Spleen (tissue), 13 donors: ENCODE measurements at regions of chr5 and their contacts with region 1.

Region 1: DNA sequence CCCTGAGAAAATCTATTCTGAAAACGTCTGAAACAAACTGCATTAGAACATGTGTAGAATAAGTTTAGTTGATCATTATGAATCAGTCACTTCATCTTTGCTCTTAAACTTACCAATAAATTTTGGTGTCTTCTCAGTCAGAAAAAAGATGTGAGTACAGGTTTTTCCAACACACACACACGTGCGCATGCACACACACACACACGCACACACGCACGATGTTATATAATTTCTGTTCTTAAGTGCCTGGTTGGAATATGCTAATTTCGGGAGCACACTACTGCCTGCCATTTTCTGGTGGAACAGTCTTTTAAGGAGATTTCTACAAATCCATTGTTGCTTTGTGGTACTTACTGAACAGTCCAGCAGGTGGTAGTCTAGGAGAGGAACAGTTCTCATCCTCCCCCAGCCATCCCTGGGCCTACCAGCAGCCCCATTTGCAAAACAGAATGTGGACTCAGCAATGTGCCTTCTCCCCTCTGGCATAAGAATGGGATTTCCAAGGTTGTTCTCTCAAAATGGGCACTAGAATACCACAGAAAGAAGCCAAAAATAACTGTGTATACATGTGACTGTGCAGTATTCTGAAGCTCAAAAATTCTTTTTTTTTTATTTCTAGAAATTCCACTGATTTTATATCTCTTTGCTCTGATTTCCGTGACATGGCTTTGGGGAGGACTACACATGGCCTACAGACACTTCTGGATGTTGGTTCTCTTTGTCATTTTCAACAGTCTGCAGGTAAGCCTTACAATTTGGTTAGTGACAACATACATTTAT is 281.3 kb downstream of the ARRDC3 start:
- DNase-seq: peak; percentile 83
- H3K4me3 ChIP-seq: no peak overlapping the region
- H3K27ac ChIP-seq: no peak overlapping the region
- H3K4me1 ChIP-seq: peaks cover 0 to 6% (median 0%) of the 10 kb centered on the region in 6 donors
- H3K27me3 ChIP-seq: no peaks in the 10 kb centered on the region
- CTCF ChIP-seq: peak; percentile 44 to 80 (median 73)
- POLR2A ChIP-seq: no peak

Region 2: DNA sequence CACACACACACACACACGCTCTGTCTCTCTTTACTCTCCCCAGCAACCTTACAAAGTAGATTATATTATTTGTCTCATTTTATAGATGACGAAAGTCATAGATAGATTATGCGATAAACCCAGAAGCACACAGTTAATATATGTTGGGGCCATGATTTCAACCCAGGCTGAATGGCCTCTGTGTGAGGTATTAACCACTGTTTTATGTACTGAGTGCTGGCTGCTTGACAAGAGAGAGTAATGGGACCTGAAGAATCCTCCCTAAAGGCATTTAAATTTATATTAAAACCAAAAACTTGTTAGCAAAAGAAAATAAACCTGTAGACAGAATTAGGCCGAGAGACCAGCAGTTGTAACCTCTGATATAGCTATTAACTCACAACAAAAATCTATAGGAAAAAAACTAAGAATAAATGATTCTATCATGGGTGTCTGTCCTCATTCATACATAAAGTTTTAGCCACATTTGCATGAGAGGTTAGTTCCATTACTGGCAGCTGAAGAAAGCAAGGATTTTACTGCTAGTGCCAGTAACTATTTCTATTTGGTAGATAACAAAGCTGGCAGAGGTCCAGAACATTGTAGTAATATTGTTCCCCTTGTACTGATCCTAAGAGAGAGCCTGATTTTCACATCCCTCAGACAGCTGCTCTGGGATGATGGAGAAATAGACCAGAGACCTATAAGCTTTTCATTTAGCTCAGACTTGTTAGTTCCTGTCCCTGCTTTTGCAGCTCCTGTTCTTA is 292.3 kb before region 1 on chr5:
- intact Hi-C with region 1: no loop called
- DNase-seq: no peak
- H3K4me3 ChIP-seq: no peak overlapping the region
- H3K27ac ChIP-seq: no peak overlapping the region
- H3K4me1 ChIP-seq: no peaks in the 10 kb centered on the region
- H3K27me3 ChIP-seq: no peaks in the 10 kb centered on the region
- CTCF ChIP-seq: no peak
- POLR2A ChIP-seq: no peak

Region 3: DNA sequence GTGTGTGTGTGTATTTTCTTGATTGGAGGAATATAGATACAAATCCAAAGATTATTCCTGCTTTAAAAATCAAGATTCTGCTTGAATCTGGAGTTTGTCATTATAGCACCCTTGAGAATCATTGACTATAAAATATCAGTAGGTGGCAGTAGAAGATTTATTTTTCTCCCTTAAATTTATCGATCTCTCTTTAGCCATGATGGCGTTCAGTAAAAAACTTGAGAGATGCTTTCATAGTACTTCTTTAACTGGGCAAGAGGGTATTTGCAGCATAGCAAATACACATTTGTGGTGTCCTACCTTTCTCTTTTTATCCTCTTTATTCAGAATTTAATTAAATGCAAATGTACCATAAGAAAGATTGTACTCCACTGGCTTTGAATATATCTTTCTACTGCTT is 235.5 kb before region 1 on chr5:
- intact Hi-C with region 1: loop called (anchors 10 kb)
- DNase-seq: no peak
- H3K4me3 ChIP-seq: no peak overlapping the region
- H3K27ac ChIP-seq: peak overlapping the region in 1 of 8 donors; percentile 46
- H3K4me1 ChIP-seq: peaks cover 0 to 10% (median 2%) of the 10 kb centered on the region in 6 donors
- H3K27me3 ChIP-seq: no peaks in the 10 kb centered on the region
- CTCF ChIP-seq: peak in 10 of 11 experiments; percentile 7 to 58 (median 44)
- POLR2A ChIP-seq: no peak

Region 4: GRCh38 chr5:90921418-90921973 is 180.3 kb before region 1 on chr5:
- intact Hi-C with region 1: no loop called
- DNase-seq: no peak
- H3K4me3 ChIP-seq: no peak overlapping the region
- H3K27ac ChIP-seq: no peak overlapping the region
- H3K4me1 ChIP-seq: no peaks in the 10 kb centered on the region
- H3K27me3 ChIP-seq: no peaks in the 10 kb centered on the region
- CTCF ChIP-seq: no peak
- POLR2A ChIP-seq: no peak

Region 5: GRCh38 chr5:91397791-91398190 is 296.0 kb after region 1 on chr5:
- intact Hi-C with region 1: loop called (anchors 10 kb)
- DNase-seq: no peak
- H3K4me3 ChIP-seq: no peak overlapping the region
- H3K27ac ChIP-seq: no peak overlapping the region
- H3K4me1 ChIP-seq: no peaks in the 10 kb centered on the region
- H3K27me3 ChIP-seq: no peaks in the 10 kb centered on the region
- CTCF ChIP-seq: no peak
- POLR2A ChIP-seq: no peak